ENCODE measurements at regions of chr16 and their contacts with region 1.

Region 1: DNA sequence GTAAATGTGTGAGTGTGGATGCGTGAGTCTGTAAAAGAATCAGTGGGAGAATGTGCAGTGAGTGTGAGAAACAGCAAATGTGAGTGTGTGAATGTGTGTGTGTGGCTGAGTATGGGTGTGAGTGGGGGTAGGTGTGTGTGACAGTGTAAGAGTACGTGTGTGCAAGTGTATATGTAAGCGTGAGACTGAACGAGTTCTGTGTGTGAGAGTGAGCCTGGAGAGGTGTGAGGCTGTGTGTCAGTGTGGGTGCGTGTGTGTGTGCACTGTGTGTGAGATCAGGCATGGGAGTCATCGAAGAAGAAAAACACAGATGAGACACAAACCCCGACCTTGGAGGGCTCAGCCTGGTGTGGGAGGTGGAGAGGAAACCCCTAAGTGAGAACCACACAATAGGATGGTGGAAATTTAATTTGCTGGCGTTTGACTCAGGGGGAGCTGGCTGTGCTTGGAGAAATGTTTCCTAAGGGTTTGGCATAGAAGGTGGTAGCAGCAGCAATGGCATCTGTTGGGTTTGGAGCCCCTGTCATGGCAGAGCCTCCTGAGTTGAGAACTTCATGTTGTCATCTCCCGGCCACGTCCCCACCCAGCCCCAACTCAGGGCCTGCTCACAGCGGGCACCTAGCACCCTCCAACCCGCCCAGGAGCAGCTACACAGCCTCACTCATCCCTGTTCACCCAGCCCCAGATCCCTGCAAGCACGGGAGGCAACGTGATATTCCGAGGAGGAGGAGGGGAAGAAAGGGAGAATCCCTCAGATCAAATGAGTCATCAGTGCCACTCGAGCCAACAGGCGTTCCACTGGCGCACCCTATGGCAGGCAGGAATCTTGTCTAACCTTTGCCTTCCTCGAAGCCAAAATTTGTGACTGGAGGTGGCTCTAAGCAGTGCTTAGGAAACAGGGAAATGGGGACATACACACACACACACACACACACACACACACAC is 14.3 kb upstream of the NUBP1 start:
- DNase-seq: peak; percentile 54
- ATAC-seq: peak; percentile 94
- H3K4me3 ChIP-seq: peak overlapping the region; percentile 15 to 34
- H3K27ac ChIP-seq: no peak overlapping the region
- H3K4me1 ChIP-seq: peaks cover 8 to 17% of the 10 kb centered on the region in 2 experiments
- H3K27me3 ChIP-seq: no peaks in the 10 kb centered on the region
- CTCF ChIP-seq: peak in 2 of 3 experiments; percentile 12 to 51; a peak in 1 of 6 replicates
- POLR2A ChIP-seq: no peak
- RAD21 ChIP-seq: peak; percentile 77

Region 2: DNA sequence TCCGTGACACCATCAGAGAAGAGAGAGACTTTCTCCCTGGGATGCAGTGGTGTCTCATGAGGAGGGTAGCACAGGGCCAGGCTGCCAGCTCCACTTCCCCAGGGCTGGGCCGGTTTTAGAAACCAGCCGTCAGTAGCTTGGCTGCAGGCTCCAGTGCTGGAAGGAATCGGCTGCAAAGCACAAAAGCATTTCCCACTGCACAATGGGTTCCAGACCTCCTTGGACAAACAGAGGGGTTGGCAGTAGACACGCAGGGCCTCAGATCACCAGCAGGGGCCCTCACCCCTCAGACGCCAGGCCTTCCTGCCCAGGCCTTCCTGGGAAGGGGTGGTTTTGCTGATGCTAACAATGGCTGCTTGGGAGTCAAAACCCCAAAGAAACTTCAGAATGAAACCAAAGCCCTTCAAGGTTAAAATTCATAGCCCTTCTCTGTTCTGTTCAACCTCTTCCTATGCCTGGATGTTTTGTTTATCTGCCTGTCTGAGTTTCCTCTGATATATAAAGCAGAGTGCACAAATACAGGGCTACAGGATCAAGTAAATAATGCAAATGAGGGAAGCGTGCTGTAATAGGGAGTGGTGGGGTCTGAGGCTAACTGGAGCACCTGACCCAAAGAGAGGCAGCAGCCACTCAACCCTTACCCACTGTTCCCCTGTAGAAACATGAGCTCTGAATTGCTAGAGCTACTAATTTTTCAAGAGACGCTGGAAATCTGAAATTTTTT is 60.9 kb before region 1 on chr16:
- CTCF ChIA-PET with region 1: no interaction called
- POLR2A ChIA-PET with region 1: no interaction called
- RAD21 ChIA-PET with region 1: no interaction called
- intact Hi-C with region 1: loop called (anchors 2 kb)
- DNase-seq: no peak
- ATAC-seq: peak; percentile 98
- H3K4me3 ChIP-seq: no peak overlapping the region
- H3K27ac ChIP-seq: no peak overlapping the region
- H3K4me1 ChIP-seq: no peaks in the 10 kb centered on the region
- H3K27me3 ChIP-seq: no peaks in the 10 kb centered on the region
- CTCF ChIP-seq: peak; percentile 30 to 81 (median 63); a peak in 5 of 6 replicates
- POLR2A ChIP-seq: no peak
- RAD21 ChIP-seq: peak; percentile 48

Region 3: GRCh38 chr16:10743610-10744393 is 14.4 kb after region 1 on chr16 and contains the start of gene NUBP1:
- CTCF ChIA-PET with region 1: no interaction called
- POLR2A ChIA-PET with region 1: no interaction called
- RAD21 ChIA-PET with region 1: no interaction called
- intact Hi-C with region 1: no loop called
- DNase-seq: peak; percentile 97
- ATAC-seq: peak; percentile 92
- H3K4me3 ChIP-seq: peak within 1 kb of the TSS; percentile 58 to 68
- H3K27ac ChIP-seq: peak within 1 kb of the TSS; percentile 85
- H3K4me1 ChIP-seq: peaks cover 16 to 37% of the 10 kb centered on the region in 2 experiments
- H3K27me3 ChIP-seq: no peaks in the 10 kb centered on the region
- CTCF ChIP-seq: no peak
- POLR2A ChIP-seq: peak; percentile 79
- RAD21 ChIP-seq: no peak
- total RNA-seq, gene NUBP1: 31.5 TPM

Region 4: GRCh38 chr16:10776280-10776679 is 46.9 kb after region 1 on chr16:
- CTCF ChIA-PET with region 1: no interaction called
- POLR2A ChIA-PET with region 1: no interaction called
- RAD21 ChIA-PET with region 1: no interaction called
- intact Hi-C with region 1: no loop called
- DNase-seq: no peak
- ATAC-seq: no peak
- H3K4me3 ChIP-seq: no peak overlapping the region
- H3K27ac ChIP-seq: no peak overlapping the region
- H3K4me1 ChIP-seq: peaks cover 0 to 8% of the 10 kb centered on the region in 2 experiments; a peak in 2 of 4 replicates
- H3K27me3 ChIP-seq: no peaks in the 10 kb centered on the region
- CTCF ChIP-seq: no peak
- POLR2A ChIP-seq: no peak
- RAD21 ChIP-seq: no peak

Region 5: GRCh38 chr16:10876799-10877341 is 147.5 kb after region 1 on chr16 and contains the start of gene CIITA:
- CTCF ChIA-PET with region 1: no interaction called
- POLR2A ChIA-PET with region 1: no interaction called
- RAD21 ChIA-PET with region 1: no interaction called
- intact Hi-C with region 1: no loop called
- DNase-seq: peak; percentile 81
- ATAC-seq: peak; percentile 89
- H3K4me3 ChIP-seq: no peak within 1 kb of the TSS
- H3K27ac ChIP-seq: no peak within 1 kb of the TSS
- H3K4me1 ChIP-seq: peaks cover 5 to 11% of the 10 kb centered on the region in 2 experiments; a peak in 3 of 4 replicates
- H3K27me3 ChIP-seq: peaks cover 15% of the 10 kb centered on the region; the same call in 1 of the 2 replicates
- CTCF ChIP-seq: no peak
- POLR2A ChIP-seq: no peak
- RAD21 ChIP-seq: no peak
- total RNA-seq, gene CIITA: 0.25 TPM

Region 6: GRCh38 chr16:11066231-11066870 is 337.0 kb after region 1 on chr16:
- CTCF ChIA-PET with region 1: no interaction called
- POLR2A ChIA-PET with region 1: no interaction called
- RAD21 ChIA-PET with region 1: no interaction called
- intact Hi-C with region 1: no loop called
- DNase-seq: no peak
- ATAC-seq: no peak
- H3K4me3 ChIP-seq: no peak overlapping the region
- H3K27ac ChIP-seq: no peak overlapping the region
- H3K4me1 ChIP-seq: no peaks in the 10 kb centered on the region
- H3K27me3 ChIP-seq: no peaks in the 10 kb centered on the region
- CTCF ChIP-seq: no peak
- POLR2A ChIP-seq: no peak
- RAD21 ChIP-seq: no peak